ENCODE measurements at regions of chr20 and their contacts with region 1.

Region 1: GRCh38 chr20:62025832-62026563 is 39.7 kb downstream of the TAF4 start:
- DNase-seq: no peak
- CTCF ChIP-seq: peak; percentile 39

Region 2: GRCh38 chr20:62143118-62143973 is 117.3 kb after region 1 on chr20 and contains the starts of genes PSMA7 and SS18L1:
- in situ Hi-C with region 1: loop called (anchors 10 kb)
- DNase-seq: peak; percentile 97
- CTCF ChIP-seq: no peak

Region 3: GRCh38 chr20:62550087-62550632 is 524.2 kb after region 1 on chr20:
- in situ Hi-C with region 1: no loop called
- DNase-seq: no peak
- CTCF ChIP-seq: no peak

Measured in GM13977 (cell line).